ENCODE measurements at regions of chr7 and their contacts with region 1.

Region 1: DNA sequence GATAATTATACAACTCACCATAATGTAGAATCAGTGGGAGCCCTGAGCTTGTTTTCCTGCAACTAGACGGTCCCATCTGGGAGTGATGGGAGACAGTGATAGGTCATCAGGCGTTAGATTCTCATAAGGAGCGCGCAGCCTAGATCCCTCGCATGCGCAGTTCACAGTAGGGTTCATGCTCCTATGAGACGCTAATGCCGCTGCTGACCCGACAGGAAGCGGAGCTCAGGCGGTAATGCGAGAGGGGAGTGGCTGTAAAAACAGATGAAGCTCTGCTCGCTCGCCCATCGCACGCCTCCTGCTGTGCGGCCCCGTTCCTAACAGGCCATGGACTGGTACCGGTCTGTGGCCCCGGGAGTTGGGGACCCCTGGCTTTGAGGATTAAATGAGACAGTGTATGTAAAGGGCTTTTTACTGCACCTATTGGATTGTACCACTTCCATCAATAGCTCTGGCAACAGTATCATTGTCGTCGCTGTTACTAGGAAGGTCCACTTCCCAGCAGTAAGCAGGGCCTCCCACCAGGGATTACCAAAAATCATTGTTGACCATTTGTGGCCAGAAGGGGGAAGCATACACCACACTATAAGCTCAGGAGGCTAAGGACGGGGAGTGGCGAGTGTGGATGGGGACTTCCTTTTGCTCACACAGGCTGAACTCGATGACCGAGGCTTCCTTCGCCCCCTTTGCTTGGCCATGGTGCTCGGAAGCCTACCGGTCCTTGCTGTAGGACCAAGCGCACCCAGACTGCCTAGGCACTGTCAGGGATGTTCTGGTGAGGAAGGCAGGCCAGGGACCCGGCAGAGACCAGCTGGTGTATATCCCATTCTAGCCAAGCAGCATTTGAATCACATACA is 26.4 kb downstream of the AKR1B1 start:
- DNase-seq: peak; percentile 85
- ATAC-seq: peak; percentile 99
- H3K4me3 ChIP-seq: peak overlapping the region; percentile 43
- H3K27ac ChIP-seq: peak overlapping the region; percentile 79
- H3K4me1 ChIP-seq: peaks cover 12% of the 10 kb centered on the region
- H3K27me3 ChIP-seq: no peaks in the 10 kb centered on the region
- CTCF ChIP-seq: peak; percentile 77

Region 2: DNA sequence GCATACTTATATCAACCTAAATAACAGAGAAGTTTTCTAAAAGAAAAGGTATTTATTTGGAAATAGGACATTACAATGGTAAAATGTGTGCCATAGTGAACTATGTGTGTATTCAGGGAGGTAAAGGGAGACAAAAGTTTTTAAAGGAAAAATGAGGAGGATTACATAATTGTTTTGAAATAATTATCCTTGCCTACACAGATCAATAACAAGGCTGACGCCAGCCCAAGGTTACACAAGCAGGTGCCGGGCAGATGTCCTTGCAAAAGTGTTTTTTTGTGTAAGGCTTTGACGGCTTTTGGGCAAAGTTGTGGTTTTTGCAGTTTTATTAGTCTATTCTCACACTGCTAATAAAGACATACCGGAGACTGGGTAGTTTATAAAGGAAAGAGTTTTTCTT is 93.0 kb before region 1 on chr7:
- intact Hi-C with region 1: no loop called
- DNase-seq: no peak
- ATAC-seq: no peak
- H3K4me3 ChIP-seq: no peak overlapping the region
- H3K27ac ChIP-seq: no peak overlapping the region
- H3K4me1 ChIP-seq: no peaks in the 10 kb centered on the region
- H3K27me3 ChIP-seq: no peaks in the 10 kb centered on the region
- CTCF ChIP-seq: no peak

Region 3: GRCh38 chr7:134504660-134505164 is 72.2 kb after region 1 on chr7:
- intact Hi-C with region 1: loop called (anchors 5 kb)
- DNase-seq: no peak
- ATAC-seq: no peak
- H3K4me3 ChIP-seq: no peak overlapping the region
- H3K27ac ChIP-seq: no peak overlapping the region
- H3K4me1 ChIP-seq: no peaks in the 10 kb centered on the region
- H3K27me3 ChIP-seq: no peaks in the 10 kb centered on the region
- CTCF ChIP-seq: no peak